ENCODE measurements at regions of chr14 and their contacts with region 1.

Region 1: DNA sequence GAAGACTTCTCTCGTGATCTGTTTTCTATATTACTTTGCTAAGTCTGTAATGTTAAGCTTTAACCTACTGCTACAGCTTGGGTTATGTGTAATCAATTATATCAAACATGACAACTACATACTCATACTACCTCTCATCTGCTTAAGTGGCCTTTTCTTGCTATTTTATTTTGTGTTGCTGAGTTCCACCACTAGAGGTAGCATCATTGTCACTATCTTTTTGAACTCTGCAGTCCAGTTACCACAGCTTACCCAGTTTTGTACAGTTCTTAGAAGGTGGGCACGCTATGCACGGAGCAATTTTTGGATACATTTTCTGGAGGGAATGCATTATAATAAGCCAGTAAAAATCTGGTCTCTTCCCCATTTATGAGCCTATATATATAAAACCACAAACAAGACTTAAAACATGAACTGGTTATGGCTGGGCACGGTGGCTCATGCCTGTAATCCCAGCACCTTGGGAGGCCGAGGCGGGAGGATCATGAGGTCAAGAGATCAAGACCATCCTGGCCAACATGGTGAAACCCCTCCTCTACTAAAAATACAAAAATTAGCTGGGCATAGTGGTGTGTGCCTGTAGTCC is 48.5 kb downstream of the SAV1 start:
- DNase-seq: no peak
- H3K4me3 ChIP-seq: no peak overlapping the region
- H3K27ac ChIP-seq: no peak overlapping the region
- H3K4me1 ChIP-seq: no peaks in the 10 kb centered on the region
- H3K27me3 ChIP-seq: no peaks in the 10 kb centered on the region
- CTCF ChIP-seq: peak; percentile 40 to 58 (median 46)

Region 2: DNA sequence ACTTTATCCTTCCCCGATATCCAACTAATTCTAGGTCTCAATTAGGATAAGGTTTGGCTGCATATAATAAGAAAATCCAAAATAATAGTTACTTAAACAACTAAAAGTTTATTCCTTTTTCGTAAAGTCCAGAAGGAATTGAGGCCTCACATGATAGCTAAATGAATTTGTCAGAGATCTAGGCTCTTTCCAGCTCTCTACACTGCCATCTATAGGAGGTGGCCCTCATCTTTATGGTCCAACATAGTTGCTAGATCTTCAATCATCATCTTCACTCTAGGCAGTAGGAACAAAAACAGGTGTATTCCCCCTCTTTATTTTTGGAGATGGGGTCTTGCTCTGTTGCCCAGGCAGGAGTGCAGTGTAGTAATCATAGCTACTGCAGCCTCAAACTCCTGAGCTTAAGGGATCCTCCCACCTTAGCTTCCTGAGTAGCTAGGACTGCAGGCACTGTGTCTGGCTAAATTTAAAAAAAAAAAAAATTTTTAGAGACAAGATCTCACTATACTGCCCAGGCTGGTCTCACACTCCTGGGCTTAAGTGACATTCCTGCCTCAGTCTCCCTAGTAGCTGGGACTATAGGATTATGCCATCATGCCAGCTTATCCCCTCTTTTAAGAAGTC is 94.9 kb after region 1 on chr14:
- intact Hi-C with region 1: loop called (anchors 5 kb)
- DNase-seq: no peak
- H3K4me3 ChIP-seq: no peak overlapping the region
- H3K27ac ChIP-seq: no peak overlapping the region
- H3K4me1 ChIP-seq: no peaks in the 10 kb centered on the region
- H3K27me3 ChIP-seq: no peaks in the 10 kb centered on the region
- CTCF ChIP-seq: peak in 2 of 3 experiments; percentile 37 to 45